CD4-positive, alpha-beta T cell (primary cell): ENCODE measurements at regions of chr19 and their contacts with region 1.

Region 1: GRCh38 chr19:37594304-37594981 is at the starts of genes ZNF540 and ZNF571:
- DNase-seq: peak; percentile 86 to 96 (median 91)
- ATAC-seq: peak; percentile 95
- H3K4me3 ChIP-seq: peak within 1 kb of the TSS; percentile 93
- H3K4me3 Mint-ChIP-seq: peak within 1 kb of the TSS; percentile 97
- H3K27ac ChIP-seq: peak within 1 kb of the TSS; percentile 94 to 97
- H3K27ac Mint-ChIP-seq: peak within 1 kb of the TSS; percentile 98
- H3K4me1 ChIP-seq: peaks cover 15% of the 10 kb centered on the region
- H3K4me1 Mint-ChIP-seq: peaks cover 39% of the 10 kb centered on the region
- H3K27me3 ChIP-seq: no peaks in the 10 kb centered on the region
- H3K27me3 Mint-ChIP-seq: no peaks in the 10 kb centered on the region
- CTCF ChIP-seq: no peak
- total RNA-seq, gene ZNF540: 11.6 to 12.0 TPM
- total RNA-seq, gene ZNF571: 6.7 to 7.0 TPM

Region 2: DNA sequence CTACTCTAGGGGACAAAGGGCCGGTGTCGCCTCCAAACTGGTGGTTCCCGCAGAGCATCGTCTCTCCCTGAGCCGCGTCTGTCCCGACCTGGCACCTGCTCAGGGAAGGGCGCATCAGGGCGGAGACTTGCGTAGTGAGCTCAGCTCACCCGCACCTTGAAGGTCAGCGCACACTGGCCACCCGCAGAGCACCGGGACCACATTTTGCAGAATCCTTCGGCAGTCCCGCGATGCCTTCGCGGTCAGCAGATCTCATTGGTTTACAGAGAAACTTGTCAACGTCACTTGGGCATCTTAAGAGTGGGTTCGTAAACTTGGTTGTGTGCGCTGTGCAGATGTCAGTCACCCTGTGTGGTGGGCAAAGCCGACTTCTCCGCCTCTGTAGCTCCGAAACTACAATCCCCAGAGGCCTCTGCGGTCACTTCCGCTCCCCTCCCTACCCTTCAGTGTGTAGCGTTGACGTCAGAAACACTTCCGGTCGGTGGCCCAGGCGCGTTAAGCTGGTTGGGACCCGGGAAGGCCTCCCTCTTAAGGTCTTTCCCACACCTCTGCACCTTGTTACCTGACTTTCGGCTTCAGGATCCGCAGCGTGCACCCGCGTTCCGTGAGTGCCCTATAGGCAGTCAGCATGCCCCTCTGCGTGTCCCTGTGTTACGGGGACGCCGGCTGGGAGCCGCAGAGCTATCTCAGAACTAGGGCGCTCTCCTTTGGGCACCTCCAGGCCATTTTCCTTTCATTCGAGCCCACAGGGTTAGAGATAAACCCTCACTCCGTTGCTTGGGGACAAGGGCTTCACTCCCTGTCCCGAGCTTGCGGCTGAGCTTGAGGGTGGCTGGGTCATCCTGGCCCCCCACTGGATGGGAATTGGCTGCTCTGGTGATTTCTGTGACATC is 260.0 kb before region 1 on chr19:
- CTCF ChIA-PET with region 1: no interaction called
- POLR2A ChIA-PET with region 1: interaction called, 11 read pairs
- intact Hi-C with region 1: no loop called
- DNase-seq: peak; percentile 76 to 96 (median 85)
- ATAC-seq: peak; percentile 99
- H3K4me3 ChIP-seq: peak overlapping the region; percentile 66
- H3K4me3 Mint-ChIP-seq: peak overlapping the region; percentile 92
- H3K27ac ChIP-seq: peak overlapping the region; percentile 54 to 69
- H3K27ac Mint-ChIP-seq: peak overlapping the region; percentile 95
- H3K4me1 ChIP-seq: peaks cover 20% of the 10 kb centered on the region
- H3K4me1 Mint-ChIP-seq: peaks cover 40% of the 10 kb centered on the region
- H3K27me3 ChIP-seq: no peaks in the 10 kb centered on the region
- H3K27me3 Mint-ChIP-seq: no peaks in the 10 kb centered on the region
- CTCF ChIP-seq: no peak

Region 3: DNA sequence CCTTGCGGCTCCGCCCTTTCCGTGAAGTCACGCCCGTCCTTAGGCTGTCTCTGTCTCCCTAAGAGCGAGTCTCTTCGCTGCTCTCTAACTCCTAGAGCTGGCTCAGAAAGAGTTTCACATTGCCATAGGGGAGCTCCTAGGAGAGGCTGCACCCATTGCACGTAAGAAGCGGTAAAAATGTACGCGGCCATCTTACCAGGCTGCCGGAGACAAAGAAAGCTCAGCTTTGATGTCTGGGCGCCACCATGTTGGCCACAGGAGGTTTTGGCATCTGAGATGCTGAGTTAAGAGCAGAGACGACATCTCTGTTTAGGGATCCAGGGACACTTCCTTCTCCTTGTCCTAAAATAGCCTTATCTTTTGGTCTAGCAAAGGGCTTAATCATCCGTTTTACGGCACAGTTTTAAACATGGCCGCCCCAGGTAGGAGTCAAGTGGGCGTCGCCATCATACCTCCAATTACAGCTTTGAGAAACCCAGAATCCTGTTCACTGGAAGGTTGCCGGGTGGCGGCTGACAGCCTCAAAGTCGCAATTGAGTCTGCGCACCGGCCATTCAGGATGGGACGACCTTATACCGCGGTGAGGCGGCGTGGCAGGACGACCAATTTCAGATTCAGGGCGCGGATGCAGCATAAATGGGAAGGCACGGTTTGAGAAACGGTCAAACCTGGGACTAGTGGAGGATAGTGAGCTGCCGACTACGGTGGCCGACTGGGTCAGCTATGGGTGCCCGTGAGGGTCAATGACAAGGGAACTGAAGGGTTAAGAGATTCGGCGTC is 87.9 kb before region 1 on chr19 and contains the start of gene ZNF793:
- CTCF ChIA-PET with region 1: no interaction called
- POLR2A ChIA-PET with region 1: interaction called, 44 read pairs
- intact Hi-C with region 1: loop called (anchors 2 to 5 kb)
- DNase-seq: peak; percentile 68 to 92 (median 78)
- ATAC-seq: peak; percentile 85
- H3K4me3 ChIP-seq: peak within 1 kb of the TSS; percentile 68
- H3K4me3 Mint-ChIP-seq: no peak within 1 kb of the TSS
- H3K27ac ChIP-seq: peak within 1 kb of the TSS; percentile 88 to 92
- H3K27ac Mint-ChIP-seq: no peak within 1 kb of the TSS
- H3K4me1 ChIP-seq: peaks cover 20% of the 10 kb centered on the region
- H3K4me1 Mint-ChIP-seq: no peaks in the 10 kb centered on the region
- H3K27me3 ChIP-seq: no peaks in the 10 kb centered on the region
- H3K27me3 Mint-ChIP-seq: no peaks in the 10 kb centered on the region
- CTCF ChIP-seq: no peak
- total RNA-seq, gene ZNF793: 2.3 TPM

Region 4: DNA sequence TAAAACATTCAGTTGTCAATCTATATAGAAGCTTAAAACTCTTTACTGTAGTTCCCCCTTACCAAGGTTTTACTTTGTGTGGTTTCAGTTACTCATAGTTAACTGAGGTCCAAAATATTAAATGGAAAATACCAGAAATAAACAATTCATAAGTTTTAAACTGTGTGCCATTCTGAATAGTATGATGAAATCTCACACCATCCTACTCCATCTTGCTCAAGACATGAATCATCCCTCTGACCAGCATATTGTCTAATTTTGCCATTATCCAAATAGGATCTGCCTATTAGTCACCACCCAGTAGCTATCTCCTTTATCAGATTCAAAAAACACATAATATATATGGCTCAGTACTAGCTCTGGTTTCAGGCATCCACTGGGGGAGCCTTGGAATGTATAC is 22.2 kb before region 1 on chr19:
- CTCF ChIA-PET with region 1: no interaction called
- POLR2A ChIA-PET with region 1: no interaction called
- intact Hi-C with region 1: no loop called
- DNase-seq: no peak
- ATAC-seq: no peak
- H3K4me3 ChIP-seq: no peak overlapping the region
- H3K4me3 Mint-ChIP-seq: no peak overlapping the region
- H3K27ac ChIP-seq: no peak overlapping the region
- H3K27ac Mint-ChIP-seq: no peak overlapping the region
- H3K4me1 ChIP-seq: no peaks in the 10 kb centered on the region
- H3K4me1 Mint-ChIP-seq: no peaks in the 10 kb centered on the region
- H3K27me3 ChIP-seq: no peaks in the 10 kb centered on the region
- H3K27me3 Mint-ChIP-seq: no peaks in the 10 kb centered on the region
- CTCF ChIP-seq: no peak

Region 5: GRCh38 chr19:37655689-37656371 is 61.4 kb after region 1 on chr19:
- CTCF ChIA-PET with region 1: interaction called, 3 read pairs
- POLR2A ChIA-PET with region 1: interaction called, 20 read pairs
- intact Hi-C with region 1: loop called (anchors 2 kb)
- DNase-seq: peak; percentile 57 to 91 (median 80)
- ATAC-seq: peak; percentile 77
- H3K4me3 ChIP-seq: peak overlapping the region; percentile 82
- H3K4me3 Mint-ChIP-seq: peak overlapping the region; percentile 99
- H3K27ac ChIP-seq: peak overlapping the region; percentile 83 to 91
- H3K27ac Mint-ChIP-seq: peak overlapping the region; percentile 98
- H3K4me1 ChIP-seq: peaks cover 14% of the 10 kb centered on the region
- H3K4me1 Mint-ChIP-seq: peaks cover 41% of the 10 kb centered on the region
- H3K27me3 ChIP-seq: no peaks in the 10 kb centered on the region
- H3K27me3 Mint-ChIP-seq: no peaks in the 10 kb centered on the region
- CTCF ChIP-seq: no peak

Region 6: DNA sequence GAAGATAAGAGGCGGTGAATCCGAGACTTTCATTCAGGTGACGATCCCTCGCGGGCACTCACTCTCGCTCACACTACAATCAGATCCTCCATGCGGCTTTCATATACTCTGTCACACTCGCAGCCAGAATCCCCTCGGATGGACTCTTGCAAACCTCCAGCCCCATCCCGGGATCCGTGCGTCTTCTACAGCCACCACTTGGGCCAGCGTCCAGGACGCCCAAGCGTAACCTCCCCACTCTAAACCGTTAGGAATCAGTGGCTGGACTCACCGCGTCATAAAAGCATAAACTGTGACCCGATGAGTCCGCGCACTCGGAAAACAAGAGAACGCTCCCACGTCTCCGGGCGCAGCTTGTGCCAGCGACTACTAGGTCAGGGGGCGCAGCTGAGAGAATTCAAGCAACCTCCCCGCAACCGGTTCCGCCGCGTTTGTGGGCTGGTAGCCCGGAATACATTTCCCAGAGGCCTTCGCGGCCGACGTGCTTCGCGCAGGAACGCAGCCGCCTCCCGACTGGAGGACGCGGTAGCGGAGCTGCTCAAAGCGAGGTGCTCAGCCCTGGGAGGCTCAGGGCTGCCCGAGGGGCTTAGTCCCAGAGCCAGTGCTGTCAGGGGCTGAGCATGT is 97.5 kb after region 1 on chr19:
- CTCF ChIA-PET with region 1: interaction called, 3 read pairs
- POLR2A ChIA-PET with region 1: interaction called, 23 read pairs
- intact Hi-C with region 1: loop called in 1 of 2 experiments (anchors 2 kb)
- DNase-seq: peak; percentile 61 to 90 (median 76)
- ATAC-seq: peak; percentile 95
- H3K4me3 ChIP-seq: peak overlapping the region; percentile 67
- H3K4me3 Mint-ChIP-seq: peak overlapping the region; percentile 96
- H3K27ac ChIP-seq: peak overlapping the region in 1 of 2 donors; percentile 32
- H3K27ac Mint-ChIP-seq: peak overlapping the region; percentile 89
- H3K4me1 ChIP-seq: peaks cover 11% of the 10 kb centered on the region
- H3K4me1 Mint-ChIP-seq: peaks cover 12% of the 10 kb centered on the region
- H3K27me3 ChIP-seq: no peaks in the 10 kb centered on the region
- H3K27me3 Mint-ChIP-seq: no peaks in the 10 kb centered on the region
- CTCF ChIP-seq: no peak